ENCODE measurements at regions of chr5 and their contacts with region 1.

Region 1: DNA sequence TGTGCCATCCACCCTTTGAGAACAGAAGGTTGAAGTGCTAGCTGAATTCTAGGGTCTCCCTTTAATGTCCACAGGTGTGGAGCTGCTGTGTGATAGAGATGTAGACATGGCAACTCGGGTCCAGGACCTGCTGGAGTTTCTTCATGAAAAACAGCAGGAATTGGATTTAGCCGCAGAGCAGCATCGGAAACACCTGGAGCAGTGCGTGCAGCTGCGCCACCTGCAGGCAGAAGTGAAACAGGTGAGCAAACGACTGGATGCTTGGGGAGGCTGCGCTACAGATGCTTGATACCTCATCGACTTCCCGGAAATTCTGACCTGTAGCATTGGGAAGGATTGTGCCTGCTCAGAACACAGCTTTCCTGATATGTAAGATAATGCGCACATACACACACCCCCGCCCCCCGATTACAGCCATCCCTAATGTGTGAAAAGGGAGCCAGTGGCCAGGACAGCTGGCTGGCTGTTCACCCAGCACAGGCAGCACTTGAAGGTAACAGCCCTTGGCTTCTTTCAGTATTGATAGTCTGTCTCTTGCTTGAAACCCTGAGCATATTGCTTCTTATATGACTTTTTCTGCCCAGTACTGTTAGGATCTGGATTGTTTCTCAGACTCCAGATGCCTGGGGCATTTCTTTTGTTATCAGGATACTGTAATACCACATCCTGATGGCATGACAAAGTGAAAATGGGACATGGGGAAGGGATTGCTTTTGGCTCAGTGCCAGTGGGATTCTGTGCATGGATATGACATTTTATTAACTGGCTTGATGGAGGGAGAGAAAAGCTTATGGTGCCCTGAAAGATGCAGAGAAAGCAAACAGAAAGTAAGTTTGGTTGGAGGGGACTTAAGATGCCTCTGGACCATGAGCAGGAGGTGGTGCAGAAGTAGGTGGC is 216.8 kb upstream of the OTULINL start:
- H3K4me3 ChIP-seq: no peak overlapping the region
- H3K27ac ChIP-seq: no peak overlapping the region
- H3K4me1 ChIP-seq: no peaks in the 10 kb centered on the region
- CTCF ChIP-seq: peak; percentile 18; the same call in 1 of the 2 replicates

Region 2: DNA sequence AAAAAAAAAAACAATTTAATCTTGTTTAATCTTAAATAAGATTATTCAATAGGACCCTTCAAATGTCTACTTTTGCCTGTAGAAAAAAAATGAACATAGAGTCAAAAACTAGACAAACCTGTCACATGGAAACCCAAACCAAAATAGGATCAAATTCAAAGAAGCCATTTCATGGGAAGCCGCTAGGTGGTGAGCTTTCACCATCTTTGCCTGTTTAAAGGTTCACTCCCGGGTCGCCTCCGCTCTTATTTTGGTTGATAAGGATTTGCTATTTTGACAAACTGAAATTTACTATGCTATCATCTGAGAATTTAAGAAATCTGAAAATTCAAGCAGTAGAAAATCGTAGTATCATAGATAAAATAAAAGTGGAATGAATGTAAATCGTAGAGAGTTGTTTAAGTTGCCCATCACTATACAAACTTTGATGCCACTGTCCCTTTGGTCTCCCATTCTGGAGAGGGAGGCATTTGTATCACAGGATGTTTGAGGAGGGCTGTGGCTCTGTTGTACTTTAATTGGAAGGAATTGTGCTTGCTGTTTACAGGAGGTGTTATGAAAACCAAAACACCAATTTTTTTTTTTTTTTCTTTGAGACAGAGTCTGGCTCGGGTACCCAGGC is 376.9 kb before region 1 on chr5:
- CTCF ChIA-PET with region 1: interaction called, 12 read pairs
- POLR2A ChIA-PET with region 1: no interaction called
- H3K4me3 ChIP-seq: no peak overlapping the region
- H3K27ac ChIP-seq: no peak overlapping the region
- H3K4me1 ChIP-seq: no peaks in the 10 kb centered on the region
- CTCF ChIP-seq: peak; percentile 72; the same call in 1 of the 2 replicates

Region 3: GRCh38 chr5:14081791-14082190 is 283.0 kb before region 1 on chr5:
- CTCF ChIA-PET with region 1: no interaction called
- POLR2A ChIA-PET with region 1: no interaction called
- H3K4me3 ChIP-seq: no peak overlapping the region
- H3K27ac ChIP-seq: no peak overlapping the region
- H3K4me1 ChIP-seq: no peaks in the 10 kb centered on the region
- CTCF ChIP-seq: no peak

Region 4: DNA sequence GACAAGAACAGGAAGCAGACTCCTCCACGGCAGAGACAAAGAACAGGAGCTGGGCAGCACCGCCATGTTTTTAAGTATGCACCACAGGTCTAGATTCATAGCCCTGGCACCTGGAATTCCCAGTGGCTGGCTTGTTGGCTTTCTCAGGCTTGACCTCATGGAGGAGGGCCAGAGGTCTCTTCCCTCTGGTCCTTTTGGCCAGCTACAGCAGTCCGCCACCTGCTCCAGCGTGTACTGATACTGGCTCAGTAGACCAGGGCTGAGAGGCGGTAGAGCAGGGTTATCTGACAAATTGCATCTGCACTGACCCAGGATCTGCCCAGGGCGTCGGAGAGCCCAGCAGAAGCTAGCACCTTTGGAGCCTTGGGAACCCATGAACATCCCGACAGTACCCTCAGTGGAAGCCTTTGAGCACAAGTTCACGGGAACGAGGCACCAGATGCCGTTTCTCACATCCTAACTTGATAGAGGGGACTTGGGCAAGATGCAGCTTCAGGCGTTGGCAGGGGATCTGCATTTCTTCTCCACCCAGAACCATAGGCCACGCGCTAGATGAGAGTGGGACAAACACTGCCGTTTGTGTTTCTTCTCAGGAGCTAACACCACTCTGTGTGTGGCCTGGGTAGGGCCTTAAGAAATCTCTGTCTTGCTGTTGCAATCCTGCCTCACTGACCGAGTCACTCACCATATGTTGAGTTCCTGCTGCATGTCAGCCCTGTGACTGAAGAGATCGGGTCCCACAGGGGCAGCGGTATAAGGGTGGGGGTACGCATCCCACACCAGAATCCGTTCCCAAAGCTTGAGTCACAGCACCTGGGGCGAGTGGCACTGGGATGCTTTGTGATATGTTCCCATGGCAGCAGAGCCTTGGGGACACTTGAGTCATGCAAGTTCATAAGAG is 126.4 kb after region 1 on chr5:
- CTCF ChIA-PET with region 1: no interaction called
- POLR2A ChIA-PET with region 1: no interaction called
- H3K4me3 ChIP-seq: no peak overlapping the region
- H3K27ac ChIP-seq: no peak overlapping the region
- H3K4me1 ChIP-seq: no peaks in the 10 kb centered on the region
- CTCF ChIP-seq: no peak